ENCODE measurements at regions of chr2 and their contacts with region 1.

Region 1: GRCh38 chr2:38535744-38536506 is 66.8 kb downstream of the HNRNPLL start:
- DNase-seq: peak; percentile 79 to 87
- ATAC-seq: peak; percentile 94 to 97 (median 96)
- H3K4me3 ChIP-seq: peak overlapping the region; percentile 32 to 63 (median 54)
- H3K27ac ChIP-seq: peak overlapping the region in 2 of 10 donors; percentile 20 to 47
- H3K4me1 ChIP-seq: peaks cover 0 to 14% (median 6%) of the 10 kb centered on the region in 9 donors
- H3K27me3 ChIP-seq: peaks cover 0 to 5% (median 0%) of the 10 kb centered on the region in 7 donors
- CTCF ChIP-seq: peak; percentile 86 to 98 (median 93)

Region 2: DNA sequence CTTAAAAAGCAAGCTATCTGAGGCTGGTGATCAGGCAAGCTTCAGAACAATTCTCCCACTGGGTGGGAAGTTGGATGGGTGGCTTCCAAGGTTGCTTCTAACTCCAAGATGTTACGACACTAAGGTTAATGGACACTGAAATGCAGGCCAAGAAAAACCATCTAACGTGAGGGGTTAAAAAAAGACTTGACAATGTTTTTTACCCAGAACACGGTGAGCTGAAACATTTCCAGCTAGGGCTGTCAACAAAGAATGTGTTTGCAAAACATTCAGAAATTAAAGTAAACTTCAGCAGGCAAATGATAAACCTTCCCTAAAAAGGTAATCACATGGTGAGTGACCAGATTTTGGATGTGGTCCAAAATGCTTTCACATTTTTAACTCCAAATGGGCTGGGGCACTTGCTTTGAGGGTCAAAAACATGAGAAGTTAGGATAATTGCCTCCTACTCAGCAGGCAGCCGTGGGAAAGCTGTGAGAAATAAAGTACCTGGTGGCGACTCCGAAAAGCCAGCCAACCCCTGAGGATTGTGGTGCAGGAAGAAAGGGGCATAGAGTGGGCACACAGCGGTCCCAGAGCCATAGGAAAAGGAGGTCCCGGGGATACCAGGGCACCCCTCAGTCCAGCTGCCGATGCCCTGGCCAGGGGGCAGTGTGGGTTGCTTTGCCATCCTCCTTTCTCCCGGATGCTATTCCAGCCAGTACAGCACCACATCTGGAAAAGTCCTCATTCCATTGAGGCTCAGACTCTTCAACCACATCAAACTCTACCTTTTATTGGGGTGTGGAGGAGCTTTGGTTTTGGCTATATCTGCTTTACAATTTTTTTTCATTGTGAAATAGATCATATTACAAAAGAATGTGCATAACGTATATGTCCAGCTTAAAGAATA is 68.8 kb before region 1 on chr2:
- intact Hi-C with region 1: no loop called
- DNase-seq: no peak
- ATAC-seq: peak in 1 of 8 donors; percentile 18
- H3K4me3 ChIP-seq: no peak overlapping the region
- H3K27ac ChIP-seq: no peak overlapping the region
- H3K4me1 ChIP-seq: no peaks in the 10 kb centered on the region
- H3K27me3 ChIP-seq: no peaks in the 10 kb centered on the region
- CTCF ChIP-seq: no peak

Region 3: GRCh38 chr2:38720613-38721241 is 184.8 kb after region 1 on chr2:
- intact Hi-C with region 1: loop called in 3 of 10 experiments (anchors 5 kb)
- DNase-seq: peak; percentile 73 to 80
- ATAC-seq: peak; percentile 86 to 94 (median 90)
- H3K4me3 ChIP-seq: no peak overlapping the region
- H3K27ac ChIP-seq: peak overlapping the region in 7 of 10 donors; percentile 11 to 78 (median 63)
- H3K4me1 ChIP-seq: peaks cover 0 to 38% (median 19%) of the 10 kb centered on the region in 9 donors
- H3K27me3 ChIP-seq: no peaks in the 10 kb centered on the region
- CTCF ChIP-seq: no peak

Region 4: DNA sequence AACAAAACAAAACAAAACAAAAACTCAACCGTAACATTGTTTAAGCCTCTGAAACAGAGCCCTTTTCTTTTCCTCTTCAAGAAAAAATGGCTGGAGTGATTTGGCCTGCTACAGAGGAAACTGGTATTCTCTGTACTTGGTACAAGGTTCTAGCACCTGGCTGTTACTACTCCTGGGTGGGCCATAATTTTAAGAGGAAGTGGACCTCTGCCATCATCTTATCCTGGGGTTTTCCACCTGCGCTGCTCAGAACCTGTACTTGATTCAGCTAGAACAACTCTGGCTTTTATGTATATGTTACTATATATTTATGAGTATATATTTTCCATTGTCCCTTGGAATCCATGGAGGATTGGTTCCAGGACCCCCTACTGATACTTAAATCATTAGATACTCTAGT is 192.8 kb after region 1 on chr2:
- intact Hi-C with region 1: loop called in 4 of 10 experiments (anchors 5 to 10 kb)
- DNase-seq: no peak
- ATAC-seq: no peak
- H3K4me3 ChIP-seq: no peak overlapping the region
- H3K27ac ChIP-seq: no peak overlapping the region
- H3K4me1 ChIP-seq: peaks cover 0 to 4% (median under 1%) of the 10 kb centered on the region in 9 donors
- H3K27me3 ChIP-seq: no peaks in the 10 kb centered on the region
- CTCF ChIP-seq: no peak

Region 5: DNA sequence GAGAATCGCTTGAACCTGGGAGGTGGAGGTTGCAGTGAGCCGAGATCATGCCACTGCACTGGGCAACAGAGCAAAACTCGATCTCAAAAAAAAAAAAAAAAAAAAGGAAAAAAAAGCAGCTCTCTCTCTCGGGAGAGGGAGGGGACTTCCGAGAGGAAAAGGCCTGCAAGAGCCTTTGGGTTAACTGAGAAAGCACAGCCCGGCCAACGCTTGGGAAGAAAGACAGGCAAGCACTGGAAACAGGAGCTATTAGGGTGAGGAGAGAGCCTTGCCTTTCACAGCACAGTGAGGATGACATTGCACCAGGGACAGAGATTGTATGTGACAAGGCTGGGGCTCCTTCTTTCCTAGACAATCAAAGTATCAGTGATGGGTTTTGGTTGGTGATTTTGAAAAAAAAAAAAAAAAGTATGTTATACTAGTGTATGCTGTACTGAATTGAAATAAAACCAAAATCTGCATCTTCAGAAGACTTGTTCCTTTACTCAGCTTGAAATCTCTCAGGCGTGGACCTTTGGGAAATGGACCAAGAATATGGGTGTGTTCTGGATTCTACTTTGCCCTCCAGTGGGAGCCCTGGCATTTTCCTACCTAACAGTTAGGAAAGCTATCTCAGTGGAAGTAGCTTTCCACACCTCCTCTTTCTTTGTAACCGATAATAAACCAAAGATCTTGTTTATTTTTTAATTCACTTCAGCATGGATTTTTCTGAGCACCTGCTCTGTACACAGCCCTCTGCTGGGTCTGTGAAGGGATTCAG is 198.6 kb after region 1 on chr2:
- intact Hi-C with region 1: loop called in 6 of 10 experiments (anchors 5 to 10 kb)
- DNase-seq: peak in 1 of 2 donors; percentile 55
- ATAC-seq: peak in 6 of 8 donors; percentile 50 to 64 (median 56)
- H3K4me3 ChIP-seq: no peak overlapping the region
- H3K27ac ChIP-seq: peak overlapping the region in 1 of 10 donors; percentile 9
- H3K4me1 ChIP-seq: peaks cover 0 to 37% (median 18%) of the 10 kb centered on the region in 9 donors
- H3K27me3 ChIP-seq: no peaks in the 10 kb centered on the region
- CTCF ChIP-seq: no peak

Region 6: GRCh38 chr2:38740851-38741731 is 205.2 kb after region 1 on chr2:
- intact Hi-C with region 1: loop called in 6 of 10 experiments (anchors 5 to 10 kb)
- DNase-seq: no peak
- ATAC-seq: peak in 6 of 8 donors; percentile 12 to 47 (median 26)
- H3K4me3 ChIP-seq: peak overlapping the region in 1 of 10 donors; percentile 9
- H3K27ac ChIP-seq: peak overlapping the region in 5 of 10 donors; percentile 14 to 40 (median 38)
- H3K4me1 ChIP-seq: peaks cover 0 to 58% (median 37%) of the 10 kb centered on the region in 9 donors
- H3K27me3 ChIP-seq: no peaks in the 10 kb centered on the region
- CTCF ChIP-seq: peak; percentile 48 to 76 (median 64)

Region 7: DNA sequence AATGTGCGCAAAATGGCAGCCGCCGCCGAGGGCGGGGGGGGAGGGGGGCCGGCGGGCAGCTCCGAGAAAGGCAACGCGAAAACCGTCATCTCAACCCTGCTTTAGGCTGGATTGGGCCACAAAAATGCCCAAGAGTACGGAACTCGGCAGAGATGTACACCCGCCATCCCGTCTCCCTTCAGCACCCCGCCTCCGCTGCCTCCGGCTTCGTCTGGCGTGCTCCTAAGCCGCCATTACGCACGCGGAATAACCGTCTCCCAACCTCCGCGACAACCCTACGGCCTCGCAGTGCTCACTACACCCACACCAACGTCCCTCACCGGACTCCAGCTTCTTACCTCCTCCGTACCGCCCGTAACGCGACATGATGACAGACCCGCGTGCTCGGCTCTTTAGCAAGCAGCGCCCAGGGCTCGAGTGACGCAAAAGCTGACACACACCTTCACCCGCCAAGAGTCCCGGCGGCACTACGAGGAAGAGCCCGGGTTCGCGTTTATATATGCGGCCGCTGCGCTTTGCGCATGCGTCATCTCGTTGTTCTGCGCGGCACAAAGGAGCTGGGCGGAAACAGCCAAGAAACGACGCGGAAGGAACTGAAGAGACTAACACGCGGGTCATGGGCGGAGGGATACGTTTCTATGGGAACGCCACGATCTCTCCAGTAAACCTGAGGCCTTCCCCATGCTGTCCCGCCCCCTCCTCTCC is 215.1 kb after region 1 on chr2 and contains the start of gene SRSF7:
- intact Hi-C with region 1: loop called in 1 of 10 experiments (anchors 5 kb)
- DNase-seq: peak; percentile 97 to 98
- ATAC-seq: peak; percentile 91 to 97 (median 94)
- H3K4me3 ChIP-seq: peak within 1 kb of the TSS; percentile 64 to 94 (median 85)
- H3K27ac ChIP-seq: peak within 1 kb of the TSS; percentile 90 to 100 (median 98)
- H3K4me1 ChIP-seq: peaks cover 8 to 60% (median 42%) of the 10 kb centered on the region in 9 donors
- H3K27me3 ChIP-seq: no peaks in the 10 kb centered on the region
- CTCF ChIP-seq: no peak
- total RNA-seq, gene SRSF7: 33.2 to 76.8 (median 47.2) TPM